Psoas muscle (tissue), 8 donors: ENCODE measurements at regions of chr5 and their contacts with region 1.

Region 1: GRCh38 chr5:180126726-180127681 is 55.4 kb upstream of the RNF130 start:
- DNase-seq: peak in 1 of 2 donors; percentile 56
- ATAC-seq: peak; percentile 56 to 66 (median 62)
- H3K4me3 ChIP-seq: no peak overlapping the region
- H3K27ac ChIP-seq: no peak overlapping the region
- H3K4me1 ChIP-seq: no peaks in the 10 kb centered on the region
- H3K27me3 ChIP-seq: peaks cover 0 to 41% (median 2%) of the 10 kb centered on the region in 3 donors
- CTCF ChIP-seq: peak; percentile 73

Region 2: GRCh38 chr5:180090098-180090768 is 36.8 kb before region 1 on chr5:
- intact Hi-C with region 1: no loop called
- DNase-seq: peak; percentile 76 to 87
- ATAC-seq: peak; percentile 89 to 95 (median 91)
- H3K4me3 ChIP-seq: peak overlapping the region; percentile 67
- H3K27ac ChIP-seq: peak overlapping the region; percentile 31
- H3K4me1 ChIP-seq: peaks cover 4% of the 10 kb centered on the region
- H3K27me3 ChIP-seq: no peaks in the 10 kb centered on the region
- CTCF ChIP-seq: peak; percentile 93

Region 3: GRCh38 chr5:180209137-180209581 is 82.2 kb after region 1 on chr5 and contains the start of gene RASGEF1C:
- intact Hi-C with region 1: loop called in 1 of 2 experiments (anchors 2 kb)
- DNase-seq: peak; percentile 65 to 70
- ATAC-seq: peak; percentile 81 to 91 (median 84)
- H3K4me3 ChIP-seq: peak within 1 kb of the TSS; percentile 59
- H3K27ac ChIP-seq: no peak within 1 kb of the TSS
- H3K4me1 ChIP-seq: no peaks in the 10 kb centered on the region
- H3K27me3 ChIP-seq: peaks cover 0 to 59% (median 7%) of the 10 kb centered on the region in 3 donors
- CTCF ChIP-seq: peak; percentile 40
- total RNA-seq, gene RASGEF1C: not detected

Region 4: GRCh38 chr5:180328296-180329137 is 201.5 kb after region 1 on chr5:
- intact Hi-C with region 1: loop called in 1 of 2 experiments (anchors 10 kb)
- DNase-seq: peak; percentile 82 to 90
- ATAC-seq: peak; percentile 65 to 81 (median 70)
- H3K4me3 ChIP-seq: no peak overlapping the region
- H3K27ac ChIP-seq: no peak overlapping the region
- H3K4me1 ChIP-seq: no peaks in the 10 kb centered on the region
- H3K27me3 ChIP-seq: no peaks in the 10 kb centered on the region
- CTCF ChIP-seq: peak; percentile 71

Region 5: GRCh38 chr5:180470966-180471582 is 344.1 kb after region 1 on chr5:
- intact Hi-C with region 1: loop called in 1 of 2 experiments (anchors 5 kb)
- DNase-seq: peak in 1 of 2 donors; percentile 46
- ATAC-seq: peak; percentile 70 to 82 (median 74)
- H3K4me3 ChIP-seq: no peak overlapping the region
- H3K27ac ChIP-seq: no peak overlapping the region
- H3K4me1 ChIP-seq: no peaks in the 10 kb centered on the region
- H3K27me3 ChIP-seq: peaks cover 0 to 2% (median 0%) of the 10 kb centered on the region in 3 donors
- CTCF ChIP-seq: peak; percentile 94